Upper lobe of right lung (tissue), 1 donor: ENCODE measurements at regions of chr18 and their contacts with region 1.

Region 1: DNA sequence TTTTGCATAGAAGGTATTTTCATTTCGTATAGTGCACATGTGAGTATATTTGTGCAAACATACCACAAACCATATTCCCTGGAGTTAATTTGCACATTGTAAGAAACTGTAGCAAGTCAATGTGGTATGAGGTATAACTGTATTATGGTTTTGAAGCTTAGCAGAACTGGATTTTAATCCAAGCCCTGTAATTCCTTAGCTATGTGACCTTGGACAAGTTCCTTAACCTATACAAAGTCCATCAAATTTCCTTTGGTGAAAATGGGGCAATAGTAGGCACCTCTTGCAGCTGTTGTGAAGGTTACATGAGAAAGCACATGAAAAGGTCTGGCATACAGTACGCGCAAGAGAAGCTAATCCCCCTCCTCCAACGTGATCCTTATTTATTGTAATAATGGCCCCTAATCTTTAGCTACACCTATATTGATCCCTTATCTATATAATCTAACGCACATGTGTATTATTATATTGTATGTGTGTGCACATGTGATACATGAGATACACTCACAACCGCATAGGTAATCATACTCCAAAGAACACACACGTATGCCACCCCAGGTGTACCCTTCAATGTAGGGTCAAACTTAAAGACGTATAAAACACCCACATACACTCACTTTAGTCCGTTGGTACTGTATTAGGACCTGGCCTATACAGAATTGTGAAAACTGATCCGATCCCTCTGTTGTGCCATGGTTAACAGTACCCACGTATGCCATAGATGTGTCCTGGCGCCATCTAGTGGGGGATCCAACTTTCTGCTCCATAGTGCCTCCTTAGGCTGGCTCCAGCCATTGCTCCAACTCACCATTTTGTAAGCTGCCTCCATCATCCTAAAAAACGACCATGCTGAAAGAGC is 402.9 kb upstream of the SLC14A2 start:
- DNase-seq: peak; percentile 77
- ATAC-seq: peak; percentile 99
- H3K4me3 ChIP-seq: no peak overlapping the region
- H3K27ac ChIP-seq: no peak overlapping the region
- H3K4me1 ChIP-seq: no peaks in the 10 kb centered on the region
- H3K27me3 ChIP-seq: no peaks in the 10 kb centered on the region
- CTCF ChIP-seq: peak; percentile 90

Region 2: GRCh38 chr18:44679056-44679905 is 533.1 kb before region 1 on chr18:
- intact Hi-C with region 1: loop called (anchors 10 kb)
- DNase-seq: peak; percentile 91
- ATAC-seq: peak; percentile 97
- H3K4me3 ChIP-seq: peak overlapping the region; percentile 82
- H3K27ac ChIP-seq: peak overlapping the region; percentile 94
- H3K4me1 ChIP-seq: peaks cover 16% of the 10 kb centered on the region
- H3K27me3 ChIP-seq: no peaks in the 10 kb centered on the region
- CTCF ChIP-seq: peak; percentile 72

Region 3: GRCh38 chr18:45291621-45292615 is 79.5 kb after region 1 on chr18:
- intact Hi-C with region 1: no loop called
- DNase-seq: no peak
- ATAC-seq: no peak
- H3K4me3 ChIP-seq: no peak overlapping the region
- H3K27ac ChIP-seq: no peak overlapping the region
- H3K4me1 ChIP-seq: no peaks in the 10 kb centered on the region
- H3K27me3 ChIP-seq: no peaks in the 10 kb centered on the region
- CTCF ChIP-seq: no peak

Region 4: GRCh38 chr18:45526114-45526841 is 313.9 kb after region 1 on chr18:
- intact Hi-C with region 1: no loop called
- DNase-seq: no peak
- ATAC-seq: no peak
- H3K4me3 ChIP-seq: no peak overlapping the region
- H3K27ac ChIP-seq: peak overlapping the region; percentile 47
- H3K4me1 ChIP-seq: no peaks in the 10 kb centered on the region
- H3K27me3 ChIP-seq: no peaks in the 10 kb centered on the region
- CTCF ChIP-seq: no peak